CD4-positive, alpha-beta memory T cell (primary cell): ENCODE measurements at regions of chr12 and their contacts with region 1.

Region 1: GRCh38 chr12:68610370-68611093 is at the start of gene RAP1B:
- DNase-seq: peak; percentile 90 to 91 (median 90)
- H3K4me3 ChIP-seq: peak within 1 kb of the TSS; percentile 88
- H3K4me3 Mint-ChIP-seq: peak within 1 kb of the TSS; percentile 90 to 98 (median 97)
- H3K27ac ChIP-seq: peak within 1 kb of the TSS; percentile 88
- H3K27ac Mint-ChIP-seq: peak within 1 kb of the TSS; percentile 94 to 99 (median 97)
- H3K4me1 ChIP-seq: peaks cover 39% of the 10 kb centered on the region
- H3K4me1 Mint-ChIP-seq: peaks cover 26 to 49% (median 37%) of the 10 kb centered on the region in 4 donors
- H3K27me3 ChIP-seq: no peaks in the 10 kb centered on the region
- H3K27me3 Mint-ChIP-seq: no peaks in the 10 kb centered on the region
- total RNA-seq, gene RAP1B: 193 to 195 TPM

Region 2: GRCh38 chr12:68065687-68066086 is 544.8 kb before region 1 on chr12:
- CTCF ChIA-PET with region 1: no interaction called
- POLR2A ChIA-PET with region 1: no interaction called
- intact Hi-C with region 1: no loop called
- DNase-seq: no peak
- H3K4me3 ChIP-seq: no peak overlapping the region
- H3K4me3 Mint-ChIP-seq: no peak overlapping the region
- H3K27ac ChIP-seq: no peak overlapping the region
- H3K27ac Mint-ChIP-seq: no peak overlapping the region
- H3K4me1 ChIP-seq: no peaks in the 10 kb centered on the region
- H3K4me1 Mint-ChIP-seq: no peaks in the 10 kb centered on the region
- H3K27me3 ChIP-seq: no peaks in the 10 kb centered on the region
- H3K27me3 Mint-ChIP-seq: peaks cover 0 to 2% of the 10 kb centered on the region in 2 donors

Region 3: DNA sequence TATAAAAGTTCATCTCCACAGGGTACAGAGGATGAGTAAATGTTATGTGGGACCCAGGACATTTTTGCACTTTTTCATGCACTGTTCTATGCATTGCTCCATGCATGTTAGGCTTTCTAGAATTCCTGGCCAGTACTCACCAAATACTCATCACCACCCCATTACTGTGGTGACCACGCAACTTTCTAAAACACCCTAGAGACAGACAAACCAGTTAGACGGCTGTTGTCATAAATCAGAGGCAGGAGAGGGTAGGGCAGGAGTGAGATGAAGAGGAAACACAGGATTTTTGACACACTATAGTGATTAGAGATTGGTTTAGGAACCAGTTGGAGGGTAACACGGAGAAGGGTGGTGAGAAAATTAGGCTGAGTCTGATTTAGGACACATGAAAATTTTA is 510.3 kb before region 1 on chr12:
- CTCF ChIA-PET with region 1: no interaction called
- POLR2A ChIA-PET with region 1: no interaction called
- intact Hi-C with region 1: no loop called
- DNase-seq: no peak
- H3K4me3 ChIP-seq: no peak overlapping the region
- H3K4me3 Mint-ChIP-seq: no peak overlapping the region
- H3K27ac ChIP-seq: no peak overlapping the region
- H3K27ac Mint-ChIP-seq: no peak overlapping the region
- H3K4me1 ChIP-seq: no peaks in the 10 kb centered on the region
- H3K4me1 Mint-ChIP-seq: no peaks in the 10 kb centered on the region
- H3K27me3 ChIP-seq: no peaks in the 10 kb centered on the region
- H3K27me3 Mint-ChIP-seq: no peaks in the 10 kb centered on the region

Region 4: GRCh38 chr12:68331869-68332727 is 278.4 kb before region 1 on chr12 and contains the start of gene MDM1:
- CTCF ChIA-PET with region 1: no interaction called
- POLR2A ChIA-PET with region 1: interaction called, 9 read pairs
- intact Hi-C with region 1: loop called (anchors 1 kb)
- DNase-seq: peak; percentile 95 to 98 (median 96)
- H3K4me3 ChIP-seq: peak within 1 kb of the TSS; percentile 60 to 77
- H3K4me3 Mint-ChIP-seq: peak within 1 kb of the TSS; percentile 88 to 93 (median 90)
- H3K27ac ChIP-seq: peak within 1 kb of the TSS; percentile 58
- H3K27ac Mint-ChIP-seq: peak within 1 kb of the TSS; percentile 64 to 95 (median 91)
- H3K4me1 ChIP-seq: peaks cover 30% of the 10 kb centered on the region
- H3K4me1 Mint-ChIP-seq: peaks cover 32 to 49% (median 42%) of the 10 kb centered on the region in 4 donors
- H3K27me3 ChIP-seq: no peaks in the 10 kb centered on the region
- H3K27me3 Mint-ChIP-seq: peaks cover 0 to 2% of the 10 kb centered on the region in 2 donors
- total RNA-seq, gene MDM1: 27.0 to 29.4 TPM

Region 5: DNA sequence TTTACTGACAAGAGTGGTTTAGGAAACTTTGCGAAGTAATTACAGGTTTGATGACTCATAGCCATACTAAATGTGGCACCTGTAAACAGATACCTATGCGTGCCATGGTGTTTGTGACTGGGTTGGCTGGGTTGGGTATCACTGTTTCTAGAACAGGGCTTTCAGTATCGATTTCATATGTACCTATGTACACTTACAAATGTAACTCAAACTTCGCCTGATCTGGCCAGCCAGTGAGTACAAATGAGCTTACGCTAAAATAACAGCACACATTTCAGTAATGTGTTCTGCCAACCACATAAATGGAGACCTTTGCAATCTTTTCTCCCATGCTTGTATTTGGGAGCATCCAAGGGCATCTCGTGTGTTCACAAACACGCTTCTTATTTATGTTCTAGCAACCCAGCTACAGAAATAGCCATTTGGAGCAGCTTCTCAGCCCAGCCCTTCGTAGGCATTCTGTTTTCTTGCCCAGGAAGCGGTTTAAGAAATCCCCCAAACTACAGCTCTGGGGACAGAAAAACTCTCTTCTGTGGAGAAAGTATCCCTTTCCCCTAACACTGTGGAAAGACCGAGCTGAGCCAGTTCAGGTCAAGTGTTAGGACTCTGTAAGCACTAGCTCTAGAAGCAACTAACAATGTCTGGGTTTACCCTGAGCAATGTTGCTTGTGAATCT is 236.1 kb before region 1 on chr12:
- CTCF ChIA-PET with region 1: no interaction called
- POLR2A ChIA-PET with region 1: interaction called, 12 read pairs
- intact Hi-C with region 1: no loop called
- DNase-seq: peak; percentile 43 to 81 (median 64)
- H3K4me3 ChIP-seq: peak overlapping the region in 1 of 2 donors; percentile 4
- H3K4me3 Mint-ChIP-seq: peak overlapping the region in 6 of 8 donors; percentile 47 to 77 (median 68)
- H3K27ac ChIP-seq: peak overlapping the region; percentile 24
- H3K27ac Mint-ChIP-seq: peak overlapping the region; percentile 72 to 90 (median 85)
- H3K4me1 ChIP-seq: peaks cover 39% of the 10 kb centered on the region
- H3K4me1 Mint-ChIP-seq: peaks cover 20 to 60% (median 31%) of the 10 kb centered on the region in 4 donors
- H3K27me3 ChIP-seq: no peaks in the 10 kb centered on the region
- H3K27me3 Mint-ChIP-seq: no peaks in the 10 kb centered on the region

Region 6: DNA sequence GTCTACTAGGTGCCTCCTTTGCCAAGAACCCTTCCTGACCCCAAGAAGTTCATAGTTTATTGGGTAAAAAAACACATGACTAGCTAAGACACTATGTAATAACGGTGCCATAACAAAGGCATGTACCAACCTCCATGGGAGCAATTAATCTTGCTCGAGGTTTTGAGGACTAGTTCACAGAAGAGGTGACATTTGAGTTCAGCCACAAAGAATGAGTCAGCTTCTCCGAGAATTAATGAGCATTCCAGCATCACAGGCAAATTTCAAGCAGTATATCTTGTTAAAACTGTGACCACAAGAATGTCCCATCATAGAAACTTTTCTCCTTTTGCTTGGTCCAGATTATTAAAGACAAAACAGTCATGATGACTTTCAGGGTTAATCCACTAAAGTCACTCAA is 112.8 kb before region 1 on chr12:
- CTCF ChIA-PET with region 1: no interaction called
- POLR2A ChIA-PET with region 1: no interaction called
- intact Hi-C with region 1: no loop called
- DNase-seq: no peak
- H3K4me3 ChIP-seq: no peak overlapping the region
- H3K4me3 Mint-ChIP-seq: peak overlapping the region in 6 of 8 donors; percentile 59 to 78 (median 72)
- H3K27ac ChIP-seq: no peak overlapping the region
- H3K27ac Mint-ChIP-seq: peak overlapping the region in 1 of 7 donors; percentile 32
- H3K4me1 ChIP-seq: peaks cover 8% of the 10 kb centered on the region
- H3K4me1 Mint-ChIP-seq: peaks cover 11 to 25% (median 16%) of the 10 kb centered on the region in 4 donors
- H3K27me3 ChIP-seq: no peaks in the 10 kb centered on the region
- H3K27me3 Mint-ChIP-seq: no peaks in the 10 kb centered on the region

Region 7: GRCh38 chr12:68538726-68539614 is 71.6 kb before region 1 on chr12:
- CTCF ChIA-PET with region 1: interaction called, 4 read pairs
- POLR2A ChIA-PET with region 1: interaction called, 34 read pairs
- intact Hi-C with region 1: loop called (anchors 2 kb)
- DNase-seq: peak; percentile 64 to 78 (median 76)
- H3K4me3 ChIP-seq: no peak overlapping the region
- H3K4me3 Mint-ChIP-seq: peak overlapping the region; percentile 48 to 83 (median 66)
- H3K27ac ChIP-seq: no peak overlapping the region
- H3K27ac Mint-ChIP-seq: peak overlapping the region; percentile 10 to 91 (median 63)
- H3K4me1 ChIP-seq: peaks cover 35% of the 10 kb centered on the region
- H3K4me1 Mint-ChIP-seq: peaks cover 26 to 56% (median 40%) of the 10 kb centered on the region in 4 donors
- H3K27me3 ChIP-seq: no peaks in the 10 kb centered on the region
- H3K27me3 Mint-ChIP-seq: no peaks in the 10 kb centered on the region

Region 8: GRCh38 chr12:68648179-68648578 is 37.6 kb after region 1 on chr12:
- CTCF ChIA-PET with region 1: interaction called, 3 read pairs
- POLR2A ChIA-PET with region 1: interaction called, 4 read pairs
- intact Hi-C with region 1: loop called (anchors 5 kb)
- DNase-seq: no peak
- H3K4me3 ChIP-seq: no peak overlapping the region
- H3K4me3 Mint-ChIP-seq: peak overlapping the region in 4 of 8 donors; percentile 5 to 50 (median 32)
- H3K27ac ChIP-seq: no peak overlapping the region
- H3K27ac Mint-ChIP-seq: peak overlapping the region; percentile 21 to 84 (median 74)
- H3K4me1 ChIP-seq: peaks cover 50% of the 10 kb centered on the region
- H3K4me1 Mint-ChIP-seq: peaks cover 33 to 65% (median 44%) of the 10 kb centered on the region in 4 donors
- H3K27me3 ChIP-seq: no peaks in the 10 kb centered on the region
- H3K27me3 Mint-ChIP-seq: no peaks in the 10 kb centered on the region

Region 9: DNA sequence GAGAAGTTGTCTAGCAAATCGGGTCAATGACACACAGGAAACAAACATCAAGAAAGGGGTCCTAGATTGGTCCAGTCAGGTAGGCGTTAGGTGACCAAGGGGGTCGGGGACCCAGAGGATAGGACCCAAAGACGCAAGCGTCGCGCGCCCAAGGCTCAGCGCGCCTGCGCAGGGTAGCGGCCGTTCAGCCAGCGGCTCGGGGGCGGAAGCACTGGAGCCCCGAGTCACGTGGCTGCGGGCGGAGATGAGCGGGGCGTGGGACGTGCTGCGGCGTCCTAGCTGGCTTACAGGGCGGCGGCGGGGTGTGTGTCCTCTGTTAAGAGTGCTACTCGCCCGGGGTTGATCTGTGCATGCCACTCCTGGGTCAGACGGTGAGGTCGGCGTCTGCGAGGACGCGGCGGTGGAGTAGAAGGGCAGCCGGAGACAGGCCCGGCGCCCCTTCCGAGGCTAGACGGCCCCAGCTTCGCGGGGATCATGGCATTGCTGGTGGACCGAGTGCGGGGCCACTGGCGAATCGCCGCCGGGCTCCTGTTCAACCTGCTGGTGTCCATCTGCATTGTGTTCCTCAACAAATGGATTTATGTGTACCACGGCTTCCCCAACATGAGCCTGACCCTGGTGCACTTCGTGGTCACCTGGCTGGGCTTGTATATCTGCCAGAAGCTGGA is 135.5 kb after region 1 on chr12 and contains the start of gene SLC35E3:
- CTCF ChIA-PET with region 1: no interaction called
- POLR2A ChIA-PET with region 1: interaction called, 19 read pairs
- intact Hi-C with region 1: loop called (anchors 1 kb)
- DNase-seq: peak; percentile 86 to 91 (median 88)
- H3K4me3 ChIP-seq: peak within 1 kb of the TSS; percentile 74 to 78
- H3K4me3 Mint-ChIP-seq: peak within 1 kb of the TSS; percentile 92 to 99 (median 98)
- H3K27ac ChIP-seq: peak within 1 kb of the TSS; percentile 69
- H3K27ac Mint-ChIP-seq: peak within 1 kb of the TSS; percentile 89 to 97 (median 93)
- H3K4me1 ChIP-seq: peaks cover 21% of the 10 kb centered on the region
- H3K4me1 Mint-ChIP-seq: peaks cover 26 to 46% (median 35%) of the 10 kb centered on the region in 4 donors
- H3K27me3 ChIP-seq: no peaks in the 10 kb centered on the region
- H3K27me3 Mint-ChIP-seq: no peaks in the 10 kb centered on the region
- total RNA-seq, gene SLC35E3: 8.2 to 11.5 TPM